AG04450 (cell line): ENCODE measurements at regions of chr11 and their contacts with region 1.

Region 1: DNA sequence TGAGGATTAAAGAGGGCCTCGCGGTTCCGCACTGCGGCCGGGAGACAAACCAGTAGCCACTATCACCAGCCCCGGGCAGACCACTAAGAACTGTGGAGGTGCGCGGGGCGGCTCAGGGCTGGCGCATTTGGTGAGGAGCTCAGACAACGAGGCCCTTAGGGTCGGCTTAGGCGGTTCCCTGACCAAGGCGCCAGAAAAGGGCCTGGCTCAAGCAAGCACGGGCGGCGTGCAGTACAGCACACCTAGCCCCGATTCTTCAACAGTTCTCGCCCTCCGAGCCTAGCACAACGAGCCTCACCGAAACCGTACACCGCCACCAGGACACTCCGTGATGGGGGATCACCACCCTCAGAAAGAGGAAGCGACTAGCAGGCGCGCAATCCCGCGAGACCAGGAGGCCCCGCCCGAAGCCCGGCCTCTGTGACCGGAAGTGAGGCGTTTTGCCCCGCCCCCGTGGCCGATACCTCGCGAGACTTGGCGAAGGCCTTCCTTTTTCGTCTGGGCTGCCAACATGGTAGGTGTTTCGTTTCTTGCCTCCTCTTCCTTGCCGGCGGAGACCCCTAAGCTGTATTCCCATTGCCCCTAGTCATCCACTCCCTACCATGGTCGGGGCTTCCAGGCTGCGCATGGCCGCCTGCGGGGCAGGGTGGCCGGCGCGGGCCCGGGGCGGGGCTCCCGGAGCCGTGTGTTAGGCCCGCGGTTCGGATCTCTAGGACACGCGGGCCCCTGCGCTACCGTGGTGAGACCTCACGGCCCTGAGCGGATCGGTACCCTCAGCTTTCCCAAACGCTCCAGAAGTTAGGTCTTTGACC is at the starts of genes RPL27A and TRIM66:
- DNase-seq: peak; percentile 91
- H3K4me3 ChIP-seq: peak within 1 kb of the TSS; percentile 76
- H3K27ac ChIP-seq: peak within 1 kb of the TSS; percentile 91
- H3K27me3 ChIP-seq: no peaks in the 10 kb centered on the region
- CTCF ChIP-seq: peak; percentile 29
- polyA plus RNA-seq, gene RPL27A: 941 and 1,068 TPM in 2 replicates
- polyA plus RNA-seq, gene TRIM66: 4.2 and 6.3 TPM in 2 replicates

Region 2: DNA sequence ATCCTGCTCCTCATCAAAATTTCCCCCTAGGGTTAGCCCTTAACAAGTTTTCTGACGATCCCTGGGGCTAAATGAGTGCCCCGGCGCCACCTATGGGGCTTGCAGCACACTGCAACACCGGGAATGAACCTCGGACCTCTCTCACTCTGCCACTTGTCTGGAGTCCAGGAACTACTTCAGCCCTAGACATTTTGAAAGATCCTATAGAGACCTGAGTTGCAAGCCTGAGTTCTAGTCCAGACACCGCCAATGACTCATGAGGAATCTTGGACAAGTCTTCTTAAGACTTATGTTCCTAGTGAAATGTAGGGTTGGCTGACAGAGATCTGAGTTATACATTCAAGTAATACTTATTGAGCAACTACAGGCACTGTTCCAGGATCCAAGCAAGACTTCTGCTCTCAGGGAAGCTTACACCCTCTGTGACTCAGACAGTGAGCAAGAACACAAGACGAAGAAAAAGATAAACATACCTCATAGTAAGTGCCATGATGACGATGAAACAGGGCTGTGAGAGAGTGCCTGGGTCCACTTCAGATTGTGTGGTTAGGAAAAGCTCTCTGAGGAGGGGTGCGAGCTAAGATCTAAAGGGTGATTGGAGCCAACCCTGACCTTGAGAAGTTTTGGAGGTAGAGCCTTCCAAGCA is 78.3 kb before region 1 on chr11:
- CTCF ChIA-PET with region 1: no interaction called
- POLR2A ChIA-PET with region 1: interaction called, 10 read pairs
- DNase-seq: peak; percentile 100
- H3K4me3 ChIP-seq: no peak overlapping the region
- H3K27ac ChIP-seq: peak overlapping the region; percentile 85
- H3K27me3 ChIP-seq: no peaks in the 10 kb centered on the region
- CTCF ChIP-seq: peak; percentile 67

Region 3: GRCh38 chr11:8671193-8671612 is 11.3 kb before region 1 on chr11:
- CTCF ChIA-PET with region 1: no interaction called
- POLR2A ChIA-PET with region 1: interaction called, 15 read pairs
- DNase-seq: peak; percentile 86
- H3K4me3 ChIP-seq: no peak overlapping the region; the same call in 1 of the 2 replicates
- H3K27ac ChIP-seq: peak overlapping the region; percentile 87
- H3K27me3 ChIP-seq: no peaks in the 10 kb centered on the region
- CTCF ChIP-seq: no peak